Activated CD8-positive, alpha-beta T cell treated with anti-CD3 and anti-CD28 coated beads for 36 hours (primary cell): ENCODE measurements at regions of chr13 and their contacts with region 1.

Region 1: DNA sequence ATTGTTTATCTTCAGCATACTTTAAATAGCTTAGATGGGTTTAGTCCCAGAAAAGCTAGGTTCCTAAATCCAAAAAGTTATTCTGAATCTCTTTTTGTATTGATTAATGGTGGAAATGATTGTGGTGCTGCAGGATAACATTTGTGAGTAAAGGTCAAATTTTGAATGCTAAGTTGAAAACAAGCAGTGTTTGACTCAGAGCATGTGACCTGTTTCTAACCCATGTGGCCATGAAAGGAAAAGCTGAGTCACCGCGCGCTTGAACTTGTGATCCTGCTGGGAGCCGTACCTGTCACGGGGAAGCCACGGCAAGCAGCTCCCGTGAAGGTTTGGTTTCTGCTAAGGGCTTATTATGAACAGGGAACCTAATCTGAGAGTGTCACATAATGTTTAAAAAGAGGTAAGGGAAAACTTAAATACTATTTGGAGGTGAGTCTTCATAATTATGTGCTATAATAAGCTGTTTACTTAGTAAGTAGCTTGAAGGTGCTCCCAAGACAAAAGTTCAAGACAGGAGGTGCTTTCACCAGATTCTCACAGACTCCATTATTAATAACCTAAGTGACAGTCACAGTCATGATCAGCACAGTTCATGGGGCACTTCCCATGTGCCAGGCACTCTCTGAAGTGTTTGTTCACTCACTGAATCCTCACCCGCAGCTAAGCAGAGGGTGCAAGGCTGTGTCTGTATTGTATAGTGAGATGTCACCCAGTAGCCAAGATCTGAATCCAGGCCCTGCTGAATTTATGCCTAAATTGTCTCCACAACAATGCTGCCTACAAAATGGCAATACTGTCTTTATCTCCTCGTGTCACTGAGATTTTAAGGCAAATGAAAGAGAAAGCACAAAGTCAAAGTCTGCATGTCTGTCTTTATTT is 286.5 kb downstream of the MYO16 start:
- DNase-seq: peak; percentile 96
- ATAC-seq: peak; percentile 94
- H3K4me3 Mint-ChIP-seq: peak overlapping the region; percentile 54
- H3K27ac Mint-ChIP-seq: peak overlapping the region; percentile 79
- H3K4me1 Mint-ChIP-seq: peaks cover 16% of the 10 kb centered on the region
- H3K27me3 Mint-ChIP-seq: peaks cover 7% of the 10 kb centered on the region
- CTCF ChIP-seq: no peak

Region 2: GRCh38 chr13:108902557-108903155 is 13.2 kb before region 1 on chr13:
- CTCF ChIA-PET with region 1: interaction called, 11 read pairs
- POLR2A ChIA-PET with region 1: interaction called, 4 read pairs
- intact Hi-C with region 1: no loop called
- DNase-seq: no peak
- ATAC-seq: no peak
- H3K4me3 Mint-ChIP-seq: no peak overlapping the region
- H3K27ac Mint-ChIP-seq: no peak overlapping the region
- H3K4me1 Mint-ChIP-seq: peaks cover 4% of the 10 kb centered on the region
- H3K27me3 Mint-ChIP-seq: peaks cover 2% of the 10 kb centered on the region
- CTCF ChIP-seq: no peak

Region 3: DNA sequence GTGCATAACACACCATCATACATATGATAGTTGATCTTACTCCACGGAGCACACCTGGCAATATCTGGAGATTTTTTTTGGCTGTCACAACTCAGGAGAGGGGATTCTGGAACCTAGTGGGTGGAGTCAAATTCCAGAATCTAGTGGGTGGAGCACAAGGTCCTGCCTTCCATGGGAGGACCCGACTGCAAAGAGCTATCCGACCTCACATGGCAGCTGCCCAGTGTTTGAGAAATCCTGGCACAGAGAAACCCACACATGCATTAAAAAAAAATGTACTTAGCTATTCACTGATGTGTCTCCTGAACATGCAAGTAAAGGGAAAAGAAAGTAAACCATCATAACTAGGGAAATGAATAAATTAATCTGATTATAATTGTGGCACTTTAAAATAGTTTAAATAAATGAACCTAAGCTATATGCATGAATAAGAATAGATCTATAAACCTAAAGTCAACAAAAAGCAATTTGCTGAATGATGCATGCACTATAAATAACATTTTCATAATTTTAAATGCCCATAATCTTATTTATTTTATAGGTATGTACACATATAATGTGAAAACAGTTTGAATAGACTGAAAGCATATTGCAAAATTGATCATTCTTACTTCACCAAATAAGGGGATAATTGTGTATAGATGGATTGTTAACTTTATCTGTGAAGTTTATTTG is 13.8 kb after region 1 on chr13:
- CTCF ChIA-PET with region 1: no interaction called
- POLR2A ChIA-PET with region 1: no interaction called
- intact Hi-C with region 1: no loop called
- DNase-seq: no peak
- ATAC-seq: no peak
- H3K4me3 Mint-ChIP-seq: no peak overlapping the region
- H3K27ac Mint-ChIP-seq: no peak overlapping the region
- H3K4me1 Mint-ChIP-seq: no peaks in the 10 kb centered on the region
- H3K27me3 Mint-ChIP-seq: peaks cover 1% of the 10 kb centered on the region
- CTCF ChIP-seq: no peak